ENCODE measurements at regions of chr5 and their contacts with region 1.

Region 1: DNA sequence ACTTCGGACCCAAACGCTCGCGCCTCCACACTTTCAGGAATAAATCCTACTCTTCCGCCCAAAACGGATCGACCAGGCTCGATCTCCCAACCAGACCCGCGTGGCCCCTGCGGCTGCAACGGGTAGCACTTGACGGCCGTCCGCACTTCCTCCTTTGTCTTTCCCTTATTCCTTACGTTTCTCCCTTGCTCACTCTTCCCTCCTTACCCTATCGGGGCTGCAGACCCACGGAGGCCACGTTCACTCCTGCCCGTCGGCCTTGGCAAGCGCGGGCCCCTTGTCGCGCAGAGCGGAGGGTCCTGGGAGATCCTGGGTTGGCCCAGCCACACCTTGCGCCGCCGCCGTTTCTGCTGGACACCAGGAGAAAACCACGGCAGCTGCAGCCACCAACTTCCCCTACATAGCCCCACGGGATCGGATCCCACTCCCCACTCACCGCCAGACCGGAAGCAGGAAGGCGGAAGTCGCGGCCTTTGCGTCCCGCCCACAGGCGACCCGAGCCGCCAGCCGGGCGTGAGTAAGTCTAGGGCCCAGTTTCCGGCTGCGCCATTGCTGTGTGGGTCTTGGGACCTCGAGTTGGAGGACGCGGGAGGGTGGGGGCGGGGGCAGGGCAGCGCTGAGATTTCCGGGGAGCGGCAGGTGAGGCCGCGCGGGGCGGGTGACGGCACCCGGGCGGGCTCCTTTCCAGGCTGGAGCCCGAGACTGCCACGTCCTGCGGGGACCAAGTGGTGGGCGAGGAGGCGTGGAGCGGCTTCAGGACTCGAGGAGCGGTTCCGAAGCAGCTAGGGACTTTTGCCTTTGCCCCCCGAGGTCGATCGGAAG is at the start of gene SMIM15:
- DNase-seq: peak; percentile 91 to 96 (median 95)
- ATAC-seq: peak; percentile 98 to 99
- H3K4me3 ChIP-seq: peak within 1 kb of the TSS; percentile 60
- H3K27ac ChIP-seq: peak within 1 kb of the TSS; percentile 81
- H3K4me1 ChIP-seq: peaks cover 5% of the 10 kb centered on the region
- H3K27me3 ChIP-seq: no peaks in the 10 kb centered on the region
- total RNA-seq, gene SMIM15: 21.0 to 30.3 (median 27.3) TPM

Region 2: DNA sequence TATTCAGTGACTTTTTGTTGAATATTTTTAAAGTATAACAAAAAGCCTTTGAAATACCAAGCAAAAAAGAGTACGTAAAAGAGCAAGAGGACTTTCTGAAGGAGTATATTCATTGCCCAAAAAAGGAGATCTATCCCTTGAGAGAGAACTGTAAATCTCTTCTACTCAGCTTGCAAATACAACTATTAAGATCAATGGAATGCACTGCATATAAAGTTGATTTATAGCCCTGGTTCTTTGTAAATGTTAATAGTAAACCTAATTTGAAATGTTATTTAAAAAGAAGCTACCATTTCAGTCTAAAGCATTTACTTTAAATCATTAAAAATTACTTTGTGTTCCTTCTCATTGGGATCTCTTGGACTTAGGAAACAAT is 1436.8 kb before region 1 on chr5:
- intact Hi-C with region 1: no loop called
- DNase-seq: no peak
- ATAC-seq: no peak
- H3K4me3 ChIP-seq: no peak overlapping the region
- H3K27ac ChIP-seq: no peak overlapping the region
- H3K4me1 ChIP-seq: no peaks in the 10 kb centered on the region
- H3K27me3 ChIP-seq: no peaks in the 10 kb centered on the region

Region 3: DNA sequence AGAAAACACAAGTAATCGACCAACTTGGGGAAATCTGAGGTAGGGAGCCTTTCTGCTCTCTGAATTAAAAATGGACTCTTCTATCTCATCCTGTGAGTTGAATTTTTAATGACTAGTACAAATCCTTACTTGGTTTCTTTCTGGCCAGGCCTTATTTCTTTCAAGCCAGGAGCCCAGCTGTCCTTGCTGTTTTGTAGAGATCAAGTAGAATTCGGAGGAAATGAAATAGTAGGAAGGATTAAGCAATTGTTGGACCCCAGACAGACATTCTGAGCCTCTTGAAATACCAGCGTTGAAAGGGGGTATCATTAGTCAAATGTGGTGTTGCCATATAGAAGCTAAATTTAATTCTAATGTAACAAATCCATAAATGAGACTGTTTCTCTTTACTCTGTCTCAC is 53.8 kb after region 1 on chr5:
- intact Hi-C with region 1: no loop called
- DNase-seq: no peak
- ATAC-seq: no peak
- H3K4me3 ChIP-seq: no peak overlapping the region
- H3K27ac ChIP-seq: no peak overlapping the region
- H3K4me1 ChIP-seq: no peaks in the 10 kb centered on the region
- H3K27me3 ChIP-seq: no peaks in the 10 kb centered on the region

Region 4: DNA sequence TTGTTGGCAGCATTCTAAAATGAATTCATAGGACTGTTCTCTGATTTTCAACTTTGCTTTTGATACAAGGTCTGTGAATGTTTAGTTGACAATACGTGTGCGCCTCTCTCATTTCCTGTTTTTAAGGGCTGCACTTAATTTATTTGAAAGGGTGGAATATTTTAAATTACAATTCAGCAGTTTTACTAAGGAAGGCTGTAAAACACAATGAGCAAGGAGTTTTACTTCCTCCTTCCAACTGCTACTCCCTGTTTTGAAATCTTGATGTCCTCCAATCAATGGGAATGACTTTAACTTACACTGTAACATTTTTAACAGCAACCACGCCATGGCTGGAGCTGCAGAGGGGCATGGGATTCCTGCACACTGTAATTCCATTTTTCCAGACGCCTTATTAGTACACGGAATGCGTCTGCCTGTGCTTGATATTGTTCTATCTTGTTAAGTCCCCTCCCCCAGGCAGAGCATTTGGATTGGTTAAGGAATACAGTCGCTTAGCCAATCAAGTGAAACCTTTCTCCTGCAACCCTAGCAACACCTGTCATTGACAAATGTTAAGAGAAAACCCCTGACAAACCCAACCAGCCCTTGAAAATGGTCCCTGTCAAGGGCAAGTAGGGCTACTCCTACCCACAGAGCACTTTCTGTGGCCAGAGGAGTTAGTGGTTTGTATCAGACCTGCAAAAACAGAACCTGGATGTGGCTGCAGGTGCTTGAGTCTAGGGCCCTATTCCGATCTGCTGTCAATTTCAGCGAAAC is 157.3 kb after region 1 on chr5:
- intact Hi-C with region 1: loop called in 2 of 4 experiments (anchors 5 to 10 kb)
- DNase-seq: no peak
- ATAC-seq: peak; percentile 66 to 67
- H3K4me3 ChIP-seq: no peak overlapping the region
- H3K27ac ChIP-seq: peak overlapping the region; percentile 39
- H3K4me1 ChIP-seq: peaks cover 2% of the 10 kb centered on the region
- H3K27me3 ChIP-seq: no peaks in the 10 kb centered on the region